RWPE1 (cell line): ENCODE measurements at regions of chr1 and their contacts with region 1.

Region 1: DNA sequence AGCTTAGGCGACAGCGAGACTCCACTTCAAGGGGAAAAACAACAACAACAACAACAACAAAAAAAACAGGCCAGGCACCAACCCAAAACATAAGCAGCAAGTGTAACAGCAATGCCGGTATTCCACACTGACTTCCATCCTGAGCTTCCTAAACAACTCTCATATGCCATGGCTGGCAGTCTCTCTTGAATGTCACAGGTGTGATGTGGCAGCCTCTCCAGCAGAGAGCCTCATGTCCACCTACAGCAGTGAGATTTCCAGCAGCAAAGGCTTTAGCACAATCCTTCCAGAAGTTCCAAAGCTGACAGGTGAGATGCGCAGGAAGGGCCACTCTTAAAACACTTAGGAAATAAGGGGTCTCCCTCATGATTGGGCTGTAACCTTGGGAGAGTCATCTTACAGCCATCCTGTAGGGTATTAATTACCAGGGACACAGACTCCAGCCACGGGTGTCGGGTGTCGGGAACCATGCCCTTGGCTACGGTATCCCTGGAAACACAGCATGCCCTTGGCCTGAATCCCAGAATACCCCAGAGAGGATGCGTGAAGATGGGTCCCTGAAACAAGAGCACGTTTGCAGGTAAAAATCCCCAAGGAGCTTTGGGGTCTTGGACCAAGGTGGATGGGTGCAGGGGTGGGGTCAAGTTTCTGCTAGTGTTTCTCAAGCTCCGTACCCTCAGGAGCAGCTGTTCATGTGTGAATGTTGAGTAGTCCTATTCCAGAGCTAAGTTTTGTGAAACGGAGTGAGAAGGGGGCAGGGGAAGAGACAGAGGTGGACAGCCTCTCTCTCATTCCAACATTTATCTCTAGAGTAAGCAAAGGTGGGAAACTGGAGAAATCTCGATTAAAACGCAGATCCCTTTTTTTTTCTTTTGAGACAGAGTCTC is 31.4 kb downstream of the CLSTN1 start:
- DNase-seq: no peak
- H3K27ac ChIP-seq: peak overlapping the region; percentile 39
- CTCF ChIP-seq: no peak

Region 2: DNA sequence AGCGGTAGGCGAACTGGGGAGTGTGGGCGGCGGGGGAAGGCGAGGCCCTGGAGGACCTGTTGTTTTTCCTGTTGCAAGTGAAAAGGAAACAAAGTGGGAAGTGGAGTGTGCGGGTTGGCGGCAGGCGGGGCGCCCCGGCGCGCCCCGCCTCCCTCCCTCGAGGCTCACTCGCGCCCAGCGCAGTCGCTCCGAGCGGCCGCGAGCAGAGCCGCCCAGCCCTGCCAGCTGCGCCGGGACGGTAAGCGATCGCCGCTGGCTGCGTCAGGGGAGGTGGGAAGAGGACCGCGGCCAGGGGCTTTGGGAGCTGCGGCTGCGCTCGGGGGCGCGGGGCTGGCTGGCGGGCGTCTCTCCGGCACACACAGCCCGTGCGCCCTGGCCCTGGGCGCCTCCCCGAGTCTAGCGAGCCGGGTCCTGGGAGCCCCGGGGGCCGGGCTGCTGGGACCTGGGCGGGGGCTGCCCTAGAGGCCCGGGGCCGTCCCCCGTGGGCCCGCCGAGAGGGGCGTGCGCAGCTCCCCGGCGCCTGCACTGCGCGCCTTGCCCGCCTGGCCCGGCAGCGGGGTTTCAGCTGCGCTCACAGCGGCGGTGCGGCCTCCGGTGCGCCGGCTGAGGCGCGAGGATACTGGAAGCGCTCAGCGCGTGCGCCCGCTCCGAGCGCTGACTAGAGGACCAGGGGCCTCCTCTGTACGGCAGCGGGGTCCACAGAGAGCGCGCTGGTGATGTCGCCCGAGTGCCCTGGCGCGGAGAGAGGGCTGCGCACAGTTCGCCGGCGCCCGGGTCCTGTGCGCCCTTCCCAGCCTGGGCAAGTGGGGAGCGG is 140.6 kb before region 1 on chr1 and contains the start of gene PIK3CD:
- CTCF ChIA-PET with region 1: interaction called, 11 read pairs
- POLR2A ChIA-PET with region 1: no interaction called
- DNase-seq: peak; percentile 34
- H3K27ac ChIP-seq: no peak within 1 kb of the TSS
- CTCF ChIP-seq: no peak